CD14-positive monocyte (primary cell): ENCODE measurements at regions of chr12 and their contacts with region 1.

Region 1: DNA sequence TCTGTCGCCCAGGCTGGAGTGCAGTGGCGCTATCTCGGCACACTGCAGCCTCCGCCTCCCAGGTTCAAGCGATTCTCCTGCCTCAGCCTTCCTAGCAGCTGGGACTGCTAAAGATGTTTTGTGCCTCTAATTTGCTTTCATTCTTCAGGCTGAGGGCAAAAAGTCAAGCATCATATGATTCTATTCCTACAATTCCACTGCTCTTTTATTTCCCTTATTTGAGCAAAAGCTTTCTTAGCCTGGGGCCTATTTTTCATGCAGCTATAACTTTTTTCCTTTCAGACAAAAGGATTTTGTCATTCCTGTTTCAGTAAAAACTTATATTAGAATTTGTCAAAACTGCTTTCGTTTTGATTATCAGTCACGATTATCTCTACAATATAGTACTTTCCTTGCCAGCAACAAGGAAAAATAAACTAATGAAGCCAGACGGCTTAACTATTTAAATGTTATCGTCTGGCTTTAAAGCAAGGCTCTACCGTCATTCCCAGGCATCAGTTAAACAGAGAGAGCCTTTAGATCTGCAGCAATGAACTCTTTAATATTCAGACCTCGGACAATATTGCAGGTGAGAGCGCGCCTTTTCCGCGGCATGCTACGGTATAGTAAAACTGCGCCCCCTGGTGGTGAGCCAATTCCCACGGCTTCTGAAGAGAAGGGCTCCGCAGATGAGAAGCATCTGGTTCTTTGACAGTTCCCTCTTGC is 1.4 kb upstream of the SLC2A13 start:
- DNase-seq: peak; percentile 60 to 77 (median 68)
- H3K4me3 ChIP-seq: peak overlapping the region in 1 of 3 experiments; percentile 52
- H3K4me3 Mint-ChIP-seq: peak overlapping the region; percentile 55 to 69
- H3K27ac ChIP-seq: no peak overlapping the region
- H3K27ac Mint-ChIP-seq: no peak overlapping the region
- H3K4me1 ChIP-seq: peaks cover 26 to 32% of the 10 kb centered on the region in 2 donors
- H3K4me1 Mint-ChIP-seq: peaks cover 39% of the 10 kb centered on the region
- H3K27me3 ChIP-seq: peaks cover 0 to 3% of the 10 kb centered on the region in 2 donors
- H3K27me3 Mint-ChIP-seq: peaks cover 6 to 11% (median 7%) of the 10 kb centered on the region in 3 donors
- CTCF ChIP-seq: peak; percentile 97

Region 2: DNA sequence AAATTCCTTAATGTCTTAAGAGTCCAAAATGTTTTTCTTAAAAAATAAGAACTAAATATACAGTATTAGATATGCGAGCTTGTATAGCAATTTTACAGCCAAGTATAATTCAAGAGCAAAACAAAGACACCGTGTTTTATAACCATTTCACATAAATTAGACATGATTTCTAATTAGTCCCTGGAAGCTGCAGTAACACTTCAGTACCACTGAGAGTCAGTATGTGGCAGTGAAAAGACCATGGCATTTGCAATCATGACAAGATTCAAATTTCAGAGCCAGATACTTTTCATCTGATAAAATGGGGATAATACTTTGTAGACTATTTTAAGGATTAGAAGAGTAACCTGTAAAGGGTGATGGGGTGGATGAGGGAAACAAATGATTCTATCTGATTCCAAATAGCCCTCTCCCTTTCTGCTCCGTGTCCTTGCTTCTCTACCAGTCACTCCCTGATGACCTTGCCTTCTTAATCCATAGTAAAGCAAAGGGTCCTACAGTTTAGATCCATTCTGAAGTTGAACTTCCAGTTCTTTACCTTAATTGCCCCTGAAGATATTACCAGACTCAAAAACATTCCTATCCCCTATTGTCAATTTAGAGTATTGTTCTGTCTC is 342.2 kb before region 1 on chr12:
- intact Hi-C with region 1: loop called in 1 of 2 experiments (anchors 10 kb)
- DNase-seq: peak; percentile 2 to 21 (median 21)
- H3K4me3 ChIP-seq: no peak overlapping the region
- H3K4me3 Mint-ChIP-seq: no peak overlapping the region
- H3K27ac ChIP-seq: no peak overlapping the region
- H3K27ac Mint-ChIP-seq: no peak overlapping the region
- H3K4me1 ChIP-seq: no peaks in the 10 kb centered on the region
- H3K4me1 Mint-ChIP-seq: peaks cover 11% of the 10 kb centered on the region
- H3K27me3 ChIP-seq: no peaks in the 10 kb centered on the region
- H3K27me3 Mint-ChIP-seq: no peaks in the 10 kb centered on the region
- CTCF ChIP-seq: peak; percentile 62

Region 3: GRCh38 chr12:40010899-40011774 is 96.1 kb before region 1 on chr12:
- intact Hi-C with region 1: loop called in 1 of 2 experiments (anchors 5 kb)
- DNase-seq: peak; percentile 57 to 76 (median 64)
- H3K4me3 ChIP-seq: peak overlapping the region; percentile 36 to 76 (median 70)
- H3K4me3 Mint-ChIP-seq: peak overlapping the region; percentile 78 to 92
- H3K27ac ChIP-seq: peak overlapping the region in 1 of 2 donors; percentile 63
- H3K27ac Mint-ChIP-seq: peak overlapping the region in 6 of 7 donors; percentile 11 to 69 (median 50)
- H3K4me1 ChIP-seq: peaks cover 6 to 7% of the 10 kb centered on the region in 2 donors
- H3K4me1 Mint-ChIP-seq: peaks cover 8% of the 10 kb centered on the region
- H3K27me3 ChIP-seq: no peaks in the 10 kb centered on the region
- H3K27me3 Mint-ChIP-seq: peaks cover 0 to 2% (median 0%) of the 10 kb centered on the region in 3 donors
- CTCF ChIP-seq: peak; percentile 84

Region 4: GRCh38 chr12:40152783-40153383 is 45.6 kb after region 1 on chr12:
- intact Hi-C with region 1: no loop called
- DNase-seq: peak; percentile 48 to 69 (median 66)
- H3K4me3 ChIP-seq: peak overlapping the region in 1 of 3 experiments; percentile 17
- H3K4me3 Mint-ChIP-seq: peak overlapping the region in 1 of 2 donors; percentile 48
- H3K27ac ChIP-seq: peak overlapping the region in 1 of 2 donors; percentile 59
- H3K27ac Mint-ChIP-seq: peak overlapping the region in 6 of 7 donors; percentile 24 to 92 (median 60)
- H3K4me1 ChIP-seq: peaks cover 41 to 49% of the 10 kb centered on the region in 2 donors
- H3K4me1 Mint-ChIP-seq: peaks cover 44% of the 10 kb centered on the region
- H3K27me3 ChIP-seq: no peaks in the 10 kb centered on the region
- H3K27me3 Mint-ChIP-seq: no peaks in the 10 kb centered on the region
- CTCF ChIP-seq: peak; percentile 89